HCT116 (cell line): ENCODE measurements at regions of chr2 and their contacts with region 1.

Region 1: GRCh38 chr2:218852911-218853667 is 6.5 kb upstream of the WNT6 start:
- DNase-seq: peak; percentile 77
- ATAC-seq: peak; percentile 71
- H3K4me3 ChIP-seq: no peak overlapping the region
- H3K27ac ChIP-seq: no peak overlapping the region
- H3K4me1 ChIP-seq: peaks cover 32 to 57% of the 10 kb centered on the region in 2 experiments
- H3K27me3 ChIP-seq: no peaks in the 10 kb centered on the region
- CTCF ChIP-seq: peak in 2 of 3 experiments; percentile 74 to 85; a peak in 4 of 6 replicates
- POLR2A ChIP-seq: no peak
- RAD21 ChIP-seq: no peak

Region 2: DNA sequence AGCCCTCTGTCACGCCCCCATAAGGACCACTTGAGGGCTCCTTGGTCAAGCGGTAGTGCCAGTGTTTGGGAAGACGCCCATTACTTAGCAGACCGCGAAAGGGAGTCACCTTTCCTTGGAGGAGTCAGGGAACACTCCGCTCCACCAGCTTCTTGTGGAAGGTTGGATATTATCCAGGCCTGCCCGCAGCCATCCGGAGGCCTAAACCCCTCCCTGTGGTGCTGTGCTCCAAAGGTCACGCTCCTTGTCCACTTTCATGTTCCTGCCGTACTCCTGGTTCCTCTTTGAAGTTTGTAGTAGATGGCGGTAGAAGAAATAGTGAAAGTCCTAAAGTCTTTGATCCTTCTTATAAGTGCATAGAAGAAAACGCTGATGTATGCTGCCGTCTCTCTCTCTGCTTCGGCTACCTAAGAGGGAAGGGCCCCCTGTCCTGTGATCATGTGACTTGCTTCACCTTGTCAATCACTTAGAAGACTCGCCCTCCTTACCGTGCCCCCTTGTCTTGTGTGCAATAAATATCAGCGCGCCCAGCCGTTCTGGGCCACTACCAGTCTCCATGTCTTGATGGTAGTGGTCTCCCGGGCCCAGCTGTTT is 498.1 kb before region 1 on chr2:
- CTCF ChIA-PET with region 1: no interaction called
- POLR2A ChIA-PET with region 1: no interaction called
- RAD21 ChIA-PET with region 1: no interaction called
- intact Hi-C with region 1: no loop called
- DNase-seq: no peak
- ATAC-seq: no peak
- H3K4me3 ChIP-seq: no peak overlapping the region
- H3K27ac ChIP-seq: no peak overlapping the region
- H3K4me1 ChIP-seq: peaks cover 8 to 9% of the 10 kb centered on the region in 2 experiments; a peak in 3 of 4 replicates
- H3K27me3 ChIP-seq: no peaks in the 10 kb centered on the region
- CTCF ChIP-seq: no peak
- POLR2A ChIP-seq: no peak
- RAD21 ChIP-seq: no peak

Region 3: DNA sequence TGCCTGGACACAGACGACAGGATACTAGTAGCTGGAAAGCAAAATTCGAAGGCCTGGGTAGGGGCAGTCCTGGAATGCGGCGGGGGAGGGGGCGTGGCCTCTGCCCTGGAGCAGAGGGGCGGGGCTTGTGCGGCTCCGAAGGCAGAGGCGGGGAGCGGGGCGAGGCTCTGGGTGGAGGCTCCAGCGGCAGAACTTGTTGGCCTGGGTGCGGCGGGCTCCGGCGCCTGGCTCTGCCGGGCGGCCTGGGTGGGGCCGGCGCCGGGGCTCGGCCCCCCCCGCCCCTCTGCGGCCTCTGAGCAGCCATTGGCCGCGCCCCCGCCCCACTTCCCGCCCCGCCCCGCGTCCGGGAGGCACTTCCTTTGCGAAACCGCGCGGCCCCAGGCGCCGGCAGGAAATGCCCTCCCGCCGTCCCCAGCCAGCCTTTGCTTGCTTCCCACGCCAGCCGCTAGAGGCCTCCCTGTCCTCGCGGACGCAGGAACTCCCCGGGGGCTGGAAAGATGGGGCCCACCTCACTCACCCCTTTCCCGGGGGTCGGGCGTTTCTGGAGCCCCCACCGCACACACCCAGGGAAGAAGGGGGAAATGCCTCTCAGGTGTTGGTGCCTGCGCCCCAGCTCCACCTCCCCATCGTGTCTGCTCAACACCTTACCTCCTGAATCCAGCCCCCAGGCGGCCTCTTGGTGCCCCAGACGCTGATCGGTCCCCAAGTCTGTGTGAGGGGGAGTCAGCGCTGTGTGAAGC is 446.7 kb before region 1 on chr2:
- CTCF ChIA-PET with region 1: no interaction called
- POLR2A ChIA-PET with region 1: no interaction called
- RAD21 ChIA-PET with region 1: no interaction called
- intact Hi-C with region 1: loop called (anchors 5 kb)
- DNase-seq: peak; percentile 84
- ATAC-seq: peak; percentile 92
- H3K4me3 ChIP-seq: peak overlapping the region; percentile 36 to 61
- H3K27ac ChIP-seq: peak overlapping the region; percentile 90
- H3K4me1 ChIP-seq: peaks cover 22 to 28% of the 10 kb centered on the region in 2 experiments
- H3K27me3 ChIP-seq: no peaks in the 10 kb centered on the region
- CTCF ChIP-seq: peak in 2 of 3 experiments; percentile 72 to 75; a peak in 4 of 6 replicates
- POLR2A ChIP-seq: no peak
- RAD21 ChIP-seq: no peak

Region 4: GRCh38 chr2:218671654-218672566 is 181.2 kb before region 1 on chr2 and contains the starts of genes RNF25 and STK36:
- CTCF ChIA-PET with region 1: no interaction called
- POLR2A ChIA-PET with region 1: no interaction called
- RAD21 ChIA-PET with region 1: no interaction called
- intact Hi-C with region 1: no loop called
- DNase-seq: peak; percentile 78
- ATAC-seq: peak; percentile 96
- H3K4me3 ChIP-seq: peak within 1 kb of the TSS; percentile 74 to 89
- H3K27ac ChIP-seq: peak within 1 kb of the TSS; percentile 74
- H3K4me1 ChIP-seq: peaks cover 11 to 13% of the 10 kb centered on the region in 2 experiments; a peak in 2 of 4 replicates
- H3K27me3 ChIP-seq: no peaks in the 10 kb centered on the region
- CTCF ChIP-seq: no peak
- POLR2A ChIP-seq: peak; percentile 44
- RAD21 ChIP-seq: no peak
- total RNA-seq, gene RNF25: 23.4 TPM
- total RNA-seq, gene STK36: 45.5 TPM

Region 5: DNA sequence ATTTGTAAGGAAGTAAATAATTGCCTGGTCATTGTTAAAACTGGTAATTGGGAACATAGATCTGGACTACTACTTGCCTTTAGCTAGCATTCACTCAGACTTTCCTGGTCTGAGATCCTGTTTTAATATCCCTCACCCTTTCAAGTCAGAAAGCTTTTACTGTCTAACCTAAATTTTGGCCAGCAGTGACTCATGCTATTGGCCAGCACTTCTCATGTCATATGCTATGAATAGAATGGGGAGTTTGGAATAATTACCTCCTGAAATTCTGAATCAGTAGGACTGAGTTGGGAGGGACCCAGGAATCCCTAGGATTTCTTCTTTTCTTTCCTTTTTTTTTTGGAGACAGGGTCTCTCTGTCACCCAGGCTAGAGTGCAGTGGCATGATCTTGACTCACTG is 161.9 kb before region 1 on chr2:
- CTCF ChIA-PET with region 1: interaction called, 41 read pairs
- POLR2A ChIA-PET with region 1: interaction called, 3 read pairs
- RAD21 ChIA-PET with region 1: no interaction called
- intact Hi-C with region 1: no loop called
- DNase-seq: no peak
- ATAC-seq: no peak
- H3K4me3 ChIP-seq: no peak overlapping the region
- H3K27ac ChIP-seq: no peak overlapping the region
- H3K4me1 ChIP-seq: no peaks in the 10 kb centered on the region
- H3K27me3 ChIP-seq: no peaks in the 10 kb centered on the region
- CTCF ChIP-seq: no peak
- POLR2A ChIP-seq: no peak
- RAD21 ChIP-seq: no peak

Region 6: GRCh38 chr2:218727502-218728165 is 125.5 kb before region 1 on chr2:
- CTCF ChIA-PET with region 1: interaction called, 19 read pairs
- POLR2A ChIA-PET with region 1: no interaction called
- RAD21 ChIA-PET with region 1: interaction called in 1 of 2 experiments, 3 read pairs
- intact Hi-C with region 1: no loop called
- DNase-seq: no peak
- ATAC-seq: no peak
- H3K4me3 ChIP-seq: no peak overlapping the region
- H3K27ac ChIP-seq: no peak overlapping the region
- H3K4me1 ChIP-seq: peaks cover 17 to 29% of the 10 kb centered on the region in 2 experiments
- H3K27me3 ChIP-seq: no peaks in the 10 kb centered on the region
- CTCF ChIP-seq: peak; percentile 47 to 83 (median 58)
- POLR2A ChIP-seq: no peak
- RAD21 ChIP-seq: peak; percentile 75

Region 7: GRCh38 chr2:218979846-218980734 is 127.0 kb after region 1 on chr2:
- CTCF ChIA-PET with region 1: interaction called, 8 read pairs
- POLR2A ChIA-PET with region 1: no interaction called
- RAD21 ChIA-PET with region 1: interaction called in 1 of 2 experiments, 3 read pairs
- intact Hi-C with region 1: loop called (anchors 2 kb)
- DNase-seq: peak; percentile 68
- ATAC-seq: peak; percentile 98
- H3K4me3 ChIP-seq: peak overlapping the region; percentile 38 to 54
- H3K27ac ChIP-seq: no peak overlapping the region
- H3K4me1 ChIP-seq: peaks cover 0 to 10% of the 10 kb centered on the region in 2 experiments; a peak in 1 of 4 replicates
- H3K27me3 ChIP-seq: no peaks in the 10 kb centered on the region
- CTCF ChIP-seq: peak; percentile 88 to 99 (median 99)
- POLR2A ChIP-seq: no peak
- RAD21 ChIP-seq: peak; percentile 91

Region 8: GRCh38 chr2:219119422-219120043 is 266.4 kb after region 1 on chr2:
- CTCF ChIA-PET with region 1: interaction called, 3 read pairs
- POLR2A ChIA-PET with region 1: no interaction called
- RAD21 ChIA-PET with region 1: interaction called in 1 of 2 experiments, 3 read pairs
- intact Hi-C with region 1: loop called (anchors 2 kb)
- DNase-seq: peak; percentile 27
- ATAC-seq: peak; percentile 93
- H3K4me3 ChIP-seq: no peak overlapping the region
- H3K27ac ChIP-seq: no peak overlapping the region
- H3K4me1 ChIP-seq: peaks cover 7 to 8% of the 10 kb centered on the region in 2 experiments
- H3K27me3 ChIP-seq: no peaks in the 10 kb centered on the region; the same call in 1 of the 2 replicates
- CTCF ChIP-seq: peak; percentile 67 to 93 (median 90)
- POLR2A ChIP-seq: no peak
- RAD21 ChIP-seq: peak; percentile 91